Activated CD4-positive, alpha-beta T cell treated with anti-CD3 and anti-CD28 coated beads, Interleukin-2, amount 10 ng/mL, durations not matched to agents 7 days and 5 days (primary cell): ENCODE measurements at regions of chr4 and their contacts with region 1.

Region 1: DNA sequence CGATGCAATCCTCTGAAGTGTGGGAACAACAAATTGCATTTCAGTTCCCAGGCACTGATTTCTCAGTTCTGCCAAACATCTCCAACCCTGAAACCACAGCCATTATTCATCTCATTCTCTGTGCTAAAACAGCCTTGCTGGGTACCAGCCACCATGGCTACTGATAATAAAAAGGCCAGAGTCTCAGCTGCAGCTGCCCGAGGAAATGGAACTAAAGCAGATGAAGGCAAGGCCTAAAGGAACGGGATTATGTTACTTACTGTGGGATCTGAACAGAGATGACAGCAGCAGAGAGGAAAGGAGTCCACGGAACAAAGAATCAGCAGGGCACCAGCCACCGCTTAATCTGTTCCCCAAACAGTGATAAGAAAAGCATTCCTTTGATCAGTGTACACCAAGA is 155.7 kb downstream of the PAPSS1 start:
- DNase-seq: no peak
- H3K4me3 Mint-ChIP-seq: no peak overlapping the region
- H3K27ac Mint-ChIP-seq: no peak overlapping the region
- H3K4me1 Mint-ChIP-seq: no peaks in the 10 kb centered on the region
- H3K27me3 Mint-ChIP-seq: no peaks in the 10 kb centered on the region

Region 2: DNA sequence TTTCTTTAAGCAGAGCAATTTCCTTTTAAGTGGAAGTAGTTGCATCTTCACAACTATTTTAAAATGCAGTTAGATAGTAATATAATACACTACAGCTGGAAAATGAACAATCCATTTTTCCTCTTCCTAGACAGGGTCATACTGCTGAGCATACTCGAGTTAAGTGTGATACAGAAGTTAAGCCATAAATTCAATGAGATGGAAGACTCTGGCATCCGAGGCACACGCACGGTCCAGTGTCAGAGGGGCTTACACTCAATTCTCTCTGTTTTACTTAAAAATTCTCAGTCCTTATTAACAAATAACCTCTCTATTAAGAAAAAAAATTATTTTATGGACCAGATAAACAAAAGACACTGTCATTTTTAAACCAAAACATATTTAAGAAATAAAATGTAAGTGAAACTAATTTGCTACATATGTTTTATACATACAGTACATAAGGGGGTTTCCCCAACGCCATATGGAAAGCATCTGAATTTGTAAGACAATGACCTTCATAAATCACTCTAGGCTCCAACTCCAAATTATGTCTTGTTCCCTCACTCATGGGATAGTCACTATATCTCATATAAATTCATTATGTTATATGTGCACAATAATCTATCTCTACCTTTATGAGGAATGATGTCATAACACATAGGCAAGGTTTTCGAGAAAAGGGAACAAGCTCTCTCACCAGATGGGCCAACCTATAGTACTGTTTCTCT is 159.6 kb before region 1 on chr4:
- CTCF ChIA-PET with region 1: no interaction called
- POLR2A ChIA-PET with region 1: no interaction called
- DNase-seq: no peak
- H3K4me3 Mint-ChIP-seq: no peak overlapping the region
- H3K27ac Mint-ChIP-seq: no peak overlapping the region
- H3K4me1 Mint-ChIP-seq: no peaks in the 10 kb centered on the region
- H3K27me3 Mint-ChIP-seq: peaks cover 2% of the 10 kb centered on the region

Region 3: GRCh38 chr4:107579099-107579498 is 14.8 kb after region 1 on chr4:
- CTCF ChIA-PET with region 1: no interaction called
- POLR2A ChIA-PET with region 1: interaction called, 12 read pairs
- DNase-seq: no peak
- H3K4me3 Mint-ChIP-seq: no peak overlapping the region
- H3K27ac Mint-ChIP-seq: no peak overlapping the region
- H3K4me1 Mint-ChIP-seq: no peaks in the 10 kb centered on the region
- H3K27me3 Mint-ChIP-seq: peaks cover 10% of the 10 kb centered on the region